KBM-7 (cell line): ENCODE measurements at regions of chr4 and their contacts with region 1.

Region 1: DNA sequence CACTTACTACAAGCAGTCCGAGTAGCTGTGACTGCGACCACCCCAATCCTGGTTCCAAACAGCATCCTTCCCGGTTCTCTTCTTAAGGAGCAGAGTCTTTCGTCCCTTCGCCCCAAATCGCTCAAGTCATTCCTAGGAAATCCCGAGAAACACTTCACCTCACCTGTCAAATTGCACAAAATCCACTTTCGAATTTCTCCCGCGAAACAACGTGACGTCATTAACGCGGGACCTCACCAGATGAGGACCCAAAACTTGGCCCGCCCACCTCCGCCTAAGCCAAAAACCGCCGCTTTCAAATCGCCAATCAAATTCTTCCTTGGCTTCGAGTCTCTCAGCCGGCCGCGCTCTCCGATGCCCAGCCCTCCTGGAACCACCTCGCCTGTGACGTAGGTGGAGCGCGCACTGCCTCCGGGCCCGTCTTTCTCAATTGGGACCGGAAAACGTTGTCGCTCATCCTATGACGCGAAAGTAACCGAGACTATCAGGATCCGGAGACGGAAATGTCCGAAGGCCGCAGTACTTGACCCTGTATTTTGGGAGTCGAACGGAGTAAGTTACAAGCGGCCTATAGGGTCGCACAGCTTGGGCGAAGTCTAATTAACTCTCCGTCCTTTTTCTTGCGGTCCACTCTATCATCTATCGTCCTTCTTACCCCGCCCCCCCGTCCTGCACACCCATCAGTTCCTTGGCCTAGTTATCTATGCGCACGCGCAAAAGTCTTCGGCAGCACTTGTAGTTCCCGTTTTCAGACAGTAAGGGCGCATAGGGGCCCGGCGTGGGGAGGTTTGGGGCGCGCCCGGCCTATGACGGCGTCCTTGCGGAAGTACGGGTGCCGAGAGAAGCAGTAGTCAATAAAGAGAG is at the starts of genes LARP7 and ZGRF1:
- DNase-seq: peak; percentile 99

Region 2: GRCh38 chr4:112938461-112939058 is 301.6 kb after region 1 on chr4:
- in situ Hi-C with region 1: loop called (anchors 25 kb)
- DNase-seq: peak; percentile 63